ENCODE measurements at regions of chr6 and their contacts with region 1.

Region 1: DNA sequence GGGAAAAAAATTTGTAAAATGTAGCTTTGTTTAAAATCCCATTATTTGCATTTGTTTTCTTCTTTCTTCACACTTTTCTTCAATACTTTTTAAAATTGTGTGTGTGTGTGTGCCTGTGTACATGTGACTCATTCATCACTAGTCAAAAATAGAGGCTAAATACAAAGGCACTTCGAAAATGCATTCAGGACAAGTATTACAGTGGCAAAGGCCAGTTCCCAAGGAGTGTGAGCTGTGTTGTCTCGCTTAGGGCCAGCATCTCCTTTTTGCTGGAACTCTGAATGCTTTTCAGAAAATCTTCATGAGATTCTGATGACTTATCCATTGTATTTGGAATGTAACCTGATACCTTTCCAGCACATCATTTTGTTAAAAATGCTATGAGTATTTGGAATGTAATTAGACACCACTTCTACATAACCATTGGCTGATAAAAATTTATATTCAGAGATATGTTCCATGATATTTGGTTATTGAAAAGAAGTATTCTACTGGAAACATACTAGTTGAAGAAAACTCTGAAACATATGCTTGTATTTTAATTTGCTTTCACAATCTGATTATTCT is 288.6 kb upstream of the CNR1 start:
- DNase-seq: no peak
- CTCF ChIP-seq: no peak

Region 2: GRCh38 chr6:88443554-88443953 is 11.2 kb before region 1 on chr6:
- CTCF ChIA-PET with region 1: interaction called, 11 read pairs
- POLR2A ChIA-PET with region 1: no interaction called
- DNase-seq: no peak
- CTCF ChIP-seq: no peak

Region 3: DNA sequence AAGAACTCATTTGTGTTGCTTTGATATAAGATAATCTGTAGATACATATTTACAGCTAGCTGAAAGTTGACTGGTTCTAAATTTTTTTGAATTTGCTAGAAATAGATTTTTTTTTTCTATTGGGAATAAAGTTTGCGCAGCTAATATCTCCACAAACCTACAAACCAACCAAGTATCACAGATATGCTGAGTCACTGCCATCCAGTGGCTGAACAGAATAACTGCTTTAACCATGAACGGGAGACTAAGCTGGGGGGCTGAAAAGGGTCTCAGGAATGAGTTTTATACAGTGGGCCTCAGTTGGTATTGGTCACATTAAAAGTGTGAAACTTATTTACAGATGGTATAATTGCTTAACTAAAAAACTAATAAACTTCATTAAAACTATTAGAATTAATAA is 38.1 kb after region 1 on chr6:
- CTCF ChIA-PET with region 1: no interaction called
- POLR2A ChIA-PET with region 1: no interaction called
- DNase-seq: no peak
- CTCF ChIP-seq: peak; percentile 29

Region 4: GRCh38 chr6:88881451-88881850 is 426.7 kb after region 1 on chr6:
- CTCF ChIA-PET with region 1: no interaction called
- POLR2A ChIA-PET with region 1: no interaction called
- DNase-seq: no peak
- CTCF ChIP-seq: no peak

Measured in GM10248 (cell line).